HCT116 (cell line): ENCODE measurements at regions of chr5 and their contacts with region 1.

Region 1: GRCh38 chr5:74919487-74919886 is 53.3 kb upstream of the FAM169A start:
- DNase-seq: peak; percentile 47
- ATAC-seq: peak; percentile 88
- H3K4me3 ChIP-seq: no peak overlapping the region
- H3K27ac ChIP-seq: no peak overlapping the region
- H3K4me1 ChIP-seq: peaks cover 0 to 3% of the 10 kb centered on the region in 2 experiments; a peak in 1 of 4 replicates
- H3K27me3 ChIP-seq: no peaks in the 10 kb centered on the region
- CTCF ChIP-seq: peak; percentile 43 to 61 (median 60); a peak in 5 of 6 replicates
- POLR2A ChIP-seq: no peak
- RAD21 ChIP-seq: peak; percentile 78

Region 2: DNA sequence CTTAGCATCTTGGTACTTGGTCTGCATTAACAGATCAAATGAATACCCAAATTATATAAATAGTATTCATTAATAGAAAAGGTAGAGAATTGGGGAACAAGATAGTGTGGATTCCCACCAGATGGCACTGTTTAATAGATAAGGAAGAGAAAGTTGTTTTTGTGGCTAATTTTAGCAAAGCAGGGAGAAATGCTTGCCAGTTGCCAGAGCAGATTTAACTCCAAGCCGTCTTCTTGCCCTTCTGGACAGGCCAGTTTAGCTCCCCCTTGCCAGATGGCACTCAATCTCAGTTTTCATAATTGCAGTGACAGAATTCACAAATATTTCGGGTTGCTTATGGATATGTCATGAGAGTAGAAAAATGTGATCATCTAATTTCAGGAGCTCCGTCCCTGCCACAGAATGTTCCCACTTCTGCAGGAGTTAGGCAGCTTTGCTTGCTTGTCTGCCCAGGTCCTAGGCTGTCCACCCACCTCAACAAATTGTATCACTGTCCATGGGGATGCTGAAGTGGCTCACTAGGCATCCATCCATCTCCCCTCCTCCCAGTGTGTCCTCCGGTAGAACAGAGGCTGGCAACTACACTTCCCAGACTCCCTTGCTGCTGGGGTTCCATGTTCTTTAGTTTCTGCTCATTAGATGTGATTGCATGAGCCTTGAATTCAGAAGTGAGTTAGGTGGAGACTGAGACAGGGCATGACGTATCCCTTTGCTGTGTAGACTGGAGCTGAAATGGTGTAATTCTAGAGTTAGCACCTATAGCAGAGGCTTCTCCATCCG is 246.3 kb before region 1 on chr5:
- CTCF ChIA-PET with region 1: interaction called, 10 read pairs
- POLR2A ChIA-PET with region 1: no interaction called
- RAD21 ChIA-PET with region 1: interaction called in 1 of 2 experiments, 3 read pairs
- intact Hi-C with region 1: loop called (anchors 1 kb)
- DNase-seq: peak; percentile 24
- ATAC-seq: peak; percentile 80
- H3K4me3 ChIP-seq: no peak overlapping the region
- H3K27ac ChIP-seq: no peak overlapping the region
- H3K4me1 ChIP-seq: peaks cover 0 to 6% of the 10 kb centered on the region in 2 experiments; a peak in 2 of 4 replicates
- H3K27me3 ChIP-seq: no peaks in the 10 kb centered on the region
- CTCF ChIP-seq: peak; percentile 43 to 84 (median 49)
- POLR2A ChIP-seq: no peak
- RAD21 ChIP-seq: peak; percentile 87